CD8-positive, alpha-beta T cell (primary cell): ENCODE measurements at regions of chr9 and their contacts with region 1.

Region 1: DNA sequence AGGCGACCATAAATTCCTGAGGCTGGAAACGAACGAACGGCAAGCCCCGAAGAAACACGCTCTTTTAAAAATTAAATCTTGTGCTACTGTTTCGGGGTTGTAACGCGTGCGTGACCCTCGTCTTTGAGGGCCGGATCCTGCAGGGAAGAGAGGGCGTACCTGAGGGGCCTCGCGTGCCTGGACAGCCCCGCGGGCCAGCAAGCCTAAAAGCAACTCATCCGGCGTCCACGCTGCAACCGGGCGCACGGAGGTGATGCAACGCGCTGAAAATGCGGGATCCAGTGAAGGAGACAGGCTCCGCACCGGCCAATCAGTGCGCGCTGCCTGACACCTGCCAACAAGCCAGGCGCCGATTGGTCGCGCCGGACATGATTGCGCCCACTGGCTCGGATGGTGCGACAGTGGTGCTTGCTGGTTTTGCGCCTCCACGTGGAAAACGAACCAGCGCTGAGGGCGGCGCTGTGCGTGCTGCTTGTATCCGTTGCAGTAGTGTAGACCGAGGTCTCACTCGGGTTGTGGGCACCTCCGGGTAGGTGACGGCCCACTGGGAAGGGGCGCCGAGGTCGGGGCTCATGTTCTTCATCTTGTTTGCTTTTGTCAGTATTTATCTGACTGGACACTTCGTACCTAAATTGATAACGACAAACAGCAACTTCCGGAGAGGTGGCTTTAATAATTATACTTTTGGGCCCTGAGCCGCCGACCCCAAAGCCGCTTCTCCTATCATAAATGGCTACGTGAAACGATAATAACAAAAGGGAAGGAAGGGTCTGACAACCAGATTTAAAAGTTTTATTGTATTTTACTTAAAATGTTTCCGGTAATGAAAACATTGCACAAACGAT is at the start of gene IARS1:
- DNase-seq: peak; percentile 97 to 100 (median 100)
- ATAC-seq: peak; percentile 91
- H3K4me3 ChIP-seq: peak within 1 kb of the TSS; percentile 79 to 88
- H3K4me3 Mint-ChIP-seq: peak within 1 kb of the TSS; percentile 99
- H3K27ac ChIP-seq: peak within 1 kb of the TSS; percentile 78 to 90
- H3K27ac Mint-ChIP-seq: peak within 1 kb of the TSS; percentile 98
- H3K4me1 ChIP-seq: peaks cover 25% of the 10 kb centered on the region
- H3K4me1 Mint-ChIP-seq: peaks cover 46% of the 10 kb centered on the region
- H3K27me3 ChIP-seq: no peaks in the 10 kb centered on the region
- H3K27me3 Mint-ChIP-seq: no peaks in the 10 kb centered on the region
- CTCF ChIP-seq: peak; percentile 28
- total RNA-seq, gene IARS1: 64.2 to 66.2 TPM

Region 2: GRCh38 chr9:92115071-92115858 is 178.4 kb before region 1 on chr9 and contains the start of gene SPTLC1:
- CTCF ChIA-PET with region 1: no interaction called
- POLR2A ChIA-PET with region 1: interaction called, 3 read pairs
- intact Hi-C with region 1: loop called (anchors 1 kb)
- DNase-seq: peak; percentile 90 to 97 (median 94)
- ATAC-seq: peak; percentile 98
- H3K4me3 ChIP-seq: peak within 1 kb of the TSS; percentile 64 to 88
- H3K4me3 Mint-ChIP-seq: peak within 1 kb of the TSS; percentile 100
- H3K27ac ChIP-seq: peak within 1 kb of the TSS; percentile 89 to 91
- H3K27ac Mint-ChIP-seq: peak within 1 kb of the TSS; percentile 99
- H3K4me1 ChIP-seq: peaks cover 14% of the 10 kb centered on the region
- H3K4me1 Mint-ChIP-seq: peaks cover 41% of the 10 kb centered on the region
- H3K27me3 ChIP-seq: no peaks in the 10 kb centered on the region
- H3K27me3 Mint-ChIP-seq: no peaks in the 10 kb centered on the region
- CTCF ChIP-seq: no peak
- total RNA-seq, gene SPTLC1: 41.4 to 41.9 TPM

Region 3: DNA sequence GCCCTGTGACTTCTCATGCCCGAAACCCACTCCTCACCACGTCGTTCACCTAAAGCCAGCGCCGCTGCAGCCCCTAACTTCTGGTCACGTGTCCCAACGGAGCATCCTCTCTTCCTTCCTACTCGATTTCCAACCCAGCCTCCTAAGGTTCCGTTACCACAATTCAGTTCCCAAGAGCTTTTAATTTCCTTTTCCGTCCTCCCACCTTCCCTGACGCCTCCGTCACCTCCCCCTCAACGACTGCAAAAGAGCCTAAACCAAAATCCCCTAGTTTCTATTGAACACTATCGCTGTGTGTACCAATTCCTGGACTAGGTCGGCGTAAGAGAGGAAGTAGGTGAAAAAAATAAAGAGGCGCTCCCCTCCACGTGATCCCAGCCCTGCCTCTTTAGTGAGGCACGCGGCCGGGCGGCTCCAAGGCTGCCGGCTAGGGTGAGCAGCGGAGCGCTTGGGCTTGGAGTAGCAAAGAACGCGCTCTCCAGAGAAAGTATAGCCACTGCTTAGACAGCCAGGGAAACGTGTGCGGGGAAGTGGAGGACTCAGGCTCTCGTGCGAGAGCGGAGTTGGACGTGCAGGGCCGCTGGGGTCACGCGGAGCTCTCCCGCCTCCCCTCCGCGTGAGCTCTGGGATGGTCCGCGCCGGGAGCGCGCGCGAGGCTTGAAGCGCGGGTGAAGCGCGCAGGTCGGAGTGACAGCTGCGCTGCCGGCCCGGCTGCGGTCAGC is 31.8 kb after region 1 on chr9 and contains the starts of genes CENPP and NOL8:
- CTCF ChIA-PET with region 1: interaction called, 3 read pairs
- POLR2A ChIA-PET with region 1: interaction called, 6 read pairs
- intact Hi-C with region 1: loop called (anchors 1 kb)
- DNase-seq: peak; percentile 70 to 93 (median 83)
- ATAC-seq: peak; percentile 92
- H3K4me3 ChIP-seq: peak within 1 kb of the TSS; percentile 81 to 84
- H3K4me3 Mint-ChIP-seq: peak within 1 kb of the TSS; percentile 99
- H3K27ac ChIP-seq: peak within 1 kb of the TSS; percentile 82 to 97
- H3K27ac Mint-ChIP-seq: peak within 1 kb of the TSS; percentile 99
- H3K4me1 ChIP-seq: peaks cover 18% of the 10 kb centered on the region
- H3K4me1 Mint-ChIP-seq: peaks cover 38% of the 10 kb centered on the region
- H3K27me3 ChIP-seq: no peaks in the 10 kb centered on the region
- H3K27me3 Mint-ChIP-seq: no peaks in the 10 kb centered on the region
- CTCF ChIP-seq: no peak
- total RNA-seq, gene CENPP: 2.8 to 4.6 TPM
- total RNA-seq, gene NOL8: 63.2 to 69.0 TPM

Region 4: GRCh38 chr9:92669890-92670708 is 376.4 kb after region 1 on chr9 and contains the start of gene IPPK:
- CTCF ChIA-PET with region 1: no interaction called
- POLR2A ChIA-PET with region 1: no interaction called
- intact Hi-C with region 1: loop called (anchors 1 to 5 kb)
- DNase-seq: peak; percentile 93 to 99 (median 96)
- ATAC-seq: peak; percentile 93
- H3K4me3 ChIP-seq: peak within 1 kb of the TSS; percentile 87 to 98
- H3K4me3 Mint-ChIP-seq: peak within 1 kb of the TSS; percentile 96
- H3K27ac ChIP-seq: peak within 1 kb of the TSS; percentile 96
- H3K27ac Mint-ChIP-seq: peak within 1 kb of the TSS; percentile 98
- H3K4me1 ChIP-seq: peaks cover 23% of the 10 kb centered on the region
- H3K4me1 Mint-ChIP-seq: peaks cover 39% of the 10 kb centered on the region
- H3K27me3 ChIP-seq: no peaks in the 10 kb centered on the region
- H3K27me3 Mint-ChIP-seq: no peaks in the 10 kb centered on the region
- CTCF ChIP-seq: no peak
- total RNA-seq, gene IPPK: 12.2 to 12.8 TPM

Region 5: GRCh38 chr9:93453047-93453914 is 1159.6 kb after region 1 on chr9 and contains the start of gene FAM120AOS:
- CTCF ChIA-PET with region 1: no interaction called
- POLR2A ChIA-PET with region 1: no interaction called
- intact Hi-C with region 1: loop called in 1 of 2 experiments (anchors 10 kb)
- DNase-seq: peak; percentile 59 to 95 (median 85)
- ATAC-seq: peak; percentile 74
- H3K4me3 ChIP-seq: peak within 1 kb of the TSS; percentile 63 to 88
- H3K4me3 Mint-ChIP-seq: peak within 1 kb of the TSS; percentile 90
- H3K27ac ChIP-seq: peak within 1 kb of the TSS; percentile 49 to 68
- H3K27ac Mint-ChIP-seq: peak within 1 kb of the TSS; percentile 95
- H3K4me1 ChIP-seq: peaks cover 27% of the 10 kb centered on the region
- H3K4me1 Mint-ChIP-seq: peaks cover 60% of the 10 kb centered on the region
- H3K27me3 ChIP-seq: no peaks in the 10 kb centered on the region
- H3K27me3 Mint-ChIP-seq: no peaks in the 10 kb centered on the region
- CTCF ChIP-seq: no peak
- total RNA-seq, gene FAM120AOS: 40.3 to 40.7 TPM